CD4-positive, alpha-beta memory T cell (primary cell): ENCODE measurements at regions of chr17 and their contacts with region 1.

Region 1: DNA sequence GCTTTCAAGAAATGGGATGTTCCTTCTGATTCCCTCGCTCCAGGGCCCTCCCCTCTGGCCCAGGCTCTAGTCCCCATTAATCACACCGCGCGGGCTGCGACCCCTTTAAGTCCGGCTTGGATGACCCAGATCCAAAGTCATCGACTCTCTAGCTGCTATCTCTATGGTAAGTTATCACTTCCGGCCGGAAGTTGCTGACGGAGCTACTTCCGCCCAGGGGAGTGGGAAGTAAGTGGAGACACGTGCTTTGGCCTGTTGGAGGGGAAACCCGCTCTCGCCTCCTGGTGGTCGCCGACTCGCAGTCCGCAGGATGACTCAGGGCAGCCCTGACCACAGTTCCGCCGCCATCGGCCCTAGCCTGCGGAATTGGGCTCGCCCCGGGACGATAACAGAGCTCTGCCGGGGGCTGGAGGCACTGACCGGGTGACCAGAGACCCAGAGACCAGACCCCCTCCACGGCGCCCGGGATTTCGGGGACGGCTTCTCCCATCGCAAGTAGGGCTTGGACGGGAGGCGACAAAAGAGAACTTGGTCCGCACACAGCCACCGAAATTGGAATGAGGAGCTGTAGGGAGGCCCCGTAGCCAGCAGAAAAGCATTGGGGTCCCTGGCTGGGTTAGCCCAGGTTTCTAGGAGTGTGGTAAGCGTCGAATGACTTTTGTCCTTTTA is 52.2 kb upstream of the SEC14L1 start:
- DNase-seq: peak; percentile 83 to 92 (median 84)
- H3K4me3 ChIP-seq: peak overlapping the region; percentile 76 to 97
- H3K4me3 Mint-ChIP-seq: peak overlapping the region; percentile 92 to 100 (median 98)
- H3K27ac ChIP-seq: peak overlapping the region; percentile 84
- H3K27ac Mint-ChIP-seq: peak overlapping the region; percentile 98 to 100 (median 99)
- H3K4me1 ChIP-seq: peaks cover 35% of the 10 kb centered on the region
- H3K4me1 Mint-ChIP-seq: peaks cover 24 to 56% (median 40%) of the 10 kb centered on the region in 4 donors
- H3K27me3 ChIP-seq: no peaks in the 10 kb centered on the region
- H3K27me3 Mint-ChIP-seq: peaks cover 0 to 2% of the 10 kb centered on the region in 2 donors

Region 2: DNA sequence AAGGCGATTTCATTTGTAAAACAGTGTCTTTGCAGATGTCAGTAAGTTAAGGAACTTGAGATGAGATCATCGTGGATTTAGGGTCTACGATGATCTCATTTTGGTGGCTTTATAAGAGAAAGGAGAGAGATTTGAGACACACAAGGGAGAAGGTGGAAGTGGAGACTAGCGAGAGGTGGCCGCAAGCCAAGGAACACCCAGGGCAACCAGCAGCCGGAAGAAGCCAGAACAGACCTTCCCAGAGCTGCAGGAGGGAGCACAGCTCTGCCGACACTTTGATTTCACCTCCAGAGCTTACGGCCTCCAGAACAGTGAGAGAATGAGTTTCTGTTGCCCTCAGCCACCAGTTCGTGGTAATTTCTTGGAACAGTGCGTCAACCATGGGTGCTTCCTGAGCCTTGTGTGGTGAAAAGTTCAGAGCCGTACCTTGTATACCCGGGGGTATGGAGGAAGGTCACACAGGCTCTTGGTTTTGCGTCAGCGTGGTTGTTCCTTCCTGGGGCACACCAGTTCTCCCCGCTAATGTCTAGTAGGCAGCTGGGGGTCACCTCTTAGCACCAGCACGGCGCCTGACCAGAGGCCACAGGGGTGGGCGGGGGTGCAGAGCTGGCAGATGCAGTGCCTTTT is 39.3 kb after region 1 on chr17:
- CTCF ChIA-PET with region 1: interaction called, 8 read pairs
- POLR2A ChIA-PET with region 1: interaction called, 11 read pairs
- intact Hi-C with region 1: no loop called
- DNase-seq: peak; percentile 82 to 90 (median 85)
- H3K4me3 ChIP-seq: peak overlapping the region; percentile 21 to 23
- H3K4me3 Mint-ChIP-seq: peak overlapping the region; percentile 47 to 86 (median 80)
- H3K27ac ChIP-seq: peak overlapping the region; percentile 54
- H3K27ac Mint-ChIP-seq: peak overlapping the region; percentile 82 to 98 (median 96)
- H3K4me1 ChIP-seq: peaks cover 16% of the 10 kb centered on the region
- H3K4me1 Mint-ChIP-seq: peaks cover 8 to 27% (median 17%) of the 10 kb centered on the region in 4 donors
- H3K27me3 ChIP-seq: no peaks in the 10 kb centered on the region
- H3K27me3 Mint-ChIP-seq: no peaks in the 10 kb centered on the region

Region 3: GRCh38 chr17:77140166-77140878 is 51.7 kb after region 1 on chr17:
- CTCF ChIA-PET with region 1: interaction called, 26 read pairs
- POLR2A ChIA-PET with region 1: interaction called, 47 read pairs
- intact Hi-C with region 1: loop called (anchors 1 kb)
- DNase-seq: peak; percentile 98 to 99 (median 99)
- H3K4me3 ChIP-seq: peak overlapping the region; percentile 38 to 68
- H3K4me3 Mint-ChIP-seq: peak overlapping the region; percentile 81 to 92 (median 85)
- H3K27ac ChIP-seq: peak overlapping the region; percentile 75
- H3K27ac Mint-ChIP-seq: peak overlapping the region; percentile 78 to 95 (median 93)
- H3K4me1 ChIP-seq: peaks cover 47% of the 10 kb centered on the region
- H3K4me1 Mint-ChIP-seq: peaks cover 28 to 65% (median 49%) of the 10 kb centered on the region in 4 donors
- H3K27me3 ChIP-seq: no peaks in the 10 kb centered on the region
- H3K27me3 Mint-ChIP-seq: no peaks in the 10 kb centered on the region

Region 4: GRCh38 chr17:77182205-77183172 is 93.9 kb after region 1 on chr17:
- CTCF ChIA-PET with region 1: interaction called, 22 read pairs
- POLR2A ChIA-PET with region 1: interaction called, 4 read pairs
- intact Hi-C with region 1: no loop called
- DNase-seq: peak in 1 of 5 donors; percentile 10
- H3K4me3 ChIP-seq: peak overlapping the region; percentile 7 to 21
- H3K4me3 Mint-ChIP-seq: peak overlapping the region; percentile 48 to 91 (median 77)
- H3K27ac ChIP-seq: peak overlapping the region; percentile 7
- H3K27ac Mint-ChIP-seq: peak overlapping the region in 6 of 7 donors; percentile 92 to 96 (median 94)
- H3K4me1 ChIP-seq: peaks cover 52% of the 10 kb centered on the region
- H3K4me1 Mint-ChIP-seq: peaks cover 11 to 25% (median 18%) of the 10 kb centered on the region in 4 donors
- H3K27me3 ChIP-seq: no peaks in the 10 kb centered on the region
- H3K27me3 Mint-ChIP-seq: no peaks in the 10 kb centered on the region

Region 5: GRCh38 chr17:77247048-77247541 is 158.5 kb after region 1 on chr17:
- CTCF ChIA-PET with region 1: interaction called, 56 read pairs
- POLR2A ChIA-PET with region 1: interaction called, 4 read pairs
- intact Hi-C with region 1: loop called (anchors 1 kb)
- DNase-seq: peak; percentile 77 to 84 (median 80)
- H3K4me3 ChIP-seq: peak overlapping the region in 1 of 2 donors; percentile 43
- H3K4me3 Mint-ChIP-seq: peak overlapping the region; percentile 55 to 82 (median 65)
- H3K27ac ChIP-seq: no peak overlapping the region
- H3K27ac Mint-ChIP-seq: peak overlapping the region in 1 of 7 donors; percentile 88
- H3K4me1 ChIP-seq: peaks cover 14% of the 10 kb centered on the region
- H3K4me1 Mint-ChIP-seq: peaks cover 5 to 12% (median 6%) of the 10 kb centered on the region in 4 donors
- H3K27me3 ChIP-seq: no peaks in the 10 kb centered on the region
- H3K27me3 Mint-ChIP-seq: peaks cover 2 to 18% of the 10 kb centered on the region in 2 donors